ENCODE measurements at regions of chr13 and their contacts with region 1.

Region 1: DNA sequence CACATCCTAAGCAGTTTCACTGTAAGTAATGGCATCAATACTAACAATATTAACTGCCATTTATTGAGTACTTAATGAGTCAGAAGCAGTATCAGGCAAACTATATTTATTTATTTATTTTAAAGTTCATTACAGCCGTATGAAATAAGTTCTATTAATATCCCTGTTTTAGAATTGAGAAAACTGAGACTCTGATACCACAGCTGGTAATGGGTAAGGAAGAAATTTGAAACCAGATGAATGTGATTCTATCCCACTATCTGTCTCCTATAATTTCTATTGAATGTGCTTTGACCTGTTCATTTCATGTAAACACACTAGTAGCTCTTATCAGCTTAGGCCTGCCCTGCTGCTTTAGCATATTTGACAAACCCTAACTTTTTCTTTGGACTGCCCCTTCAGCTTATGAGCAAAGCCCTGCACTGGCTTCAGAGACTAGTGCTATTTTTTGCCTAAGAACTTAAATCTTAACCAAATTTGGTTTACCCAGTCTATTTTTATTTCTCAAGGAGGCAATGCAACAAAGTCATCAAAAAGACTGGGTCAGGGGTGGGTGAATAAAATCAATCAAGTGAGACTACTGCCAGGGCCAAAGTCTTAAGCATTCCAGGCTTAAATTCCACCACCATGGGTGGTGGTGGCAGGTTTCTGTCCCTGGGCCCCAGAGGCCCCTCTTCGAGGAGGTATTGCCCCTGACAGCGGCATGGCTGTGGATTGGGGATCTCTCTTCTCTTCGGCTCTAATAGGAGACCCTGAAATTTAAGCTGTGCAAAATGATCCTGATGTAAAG is 143.4 kb downstream of the DLEU7 start:
- DNase-seq: no peak
- H3K4me3 ChIP-seq: no peak overlapping the region
- H3K27ac ChIP-seq: no peak overlapping the region
- H3K4me1 ChIP-seq: no peaks in the 10 kb centered on the region
- H3K27me3 ChIP-seq: no peaks in the 10 kb centered on the region
- CTCF ChIP-seq: no peak
- EP300 ChIP-seq: no peak
- POLR2A ChIP-seq: no peak

Region 2: GRCh38 chr13:50309882-50310594 is 390.0 kb before region 1 on chr13:
- intact Hi-C with region 1: loop called in 1 of 4 experiments (anchors 5 kb)
- DNase-seq: no peak
- H3K4me3 ChIP-seq: no peak overlapping the region
- H3K27ac ChIP-seq: no peak overlapping the region
- H3K4me1 ChIP-seq: no peaks in the 10 kb centered on the region
- H3K27me3 ChIP-seq: no peaks in the 10 kb centered on the region
- CTCF ChIP-seq: no peak
- EP300 ChIP-seq: no peak
- POLR2A ChIP-seq: no peak